HEK293 (cell line): ENCODE measurements at regions of chr2 and their contacts with region 1.

Region 1: DNA sequence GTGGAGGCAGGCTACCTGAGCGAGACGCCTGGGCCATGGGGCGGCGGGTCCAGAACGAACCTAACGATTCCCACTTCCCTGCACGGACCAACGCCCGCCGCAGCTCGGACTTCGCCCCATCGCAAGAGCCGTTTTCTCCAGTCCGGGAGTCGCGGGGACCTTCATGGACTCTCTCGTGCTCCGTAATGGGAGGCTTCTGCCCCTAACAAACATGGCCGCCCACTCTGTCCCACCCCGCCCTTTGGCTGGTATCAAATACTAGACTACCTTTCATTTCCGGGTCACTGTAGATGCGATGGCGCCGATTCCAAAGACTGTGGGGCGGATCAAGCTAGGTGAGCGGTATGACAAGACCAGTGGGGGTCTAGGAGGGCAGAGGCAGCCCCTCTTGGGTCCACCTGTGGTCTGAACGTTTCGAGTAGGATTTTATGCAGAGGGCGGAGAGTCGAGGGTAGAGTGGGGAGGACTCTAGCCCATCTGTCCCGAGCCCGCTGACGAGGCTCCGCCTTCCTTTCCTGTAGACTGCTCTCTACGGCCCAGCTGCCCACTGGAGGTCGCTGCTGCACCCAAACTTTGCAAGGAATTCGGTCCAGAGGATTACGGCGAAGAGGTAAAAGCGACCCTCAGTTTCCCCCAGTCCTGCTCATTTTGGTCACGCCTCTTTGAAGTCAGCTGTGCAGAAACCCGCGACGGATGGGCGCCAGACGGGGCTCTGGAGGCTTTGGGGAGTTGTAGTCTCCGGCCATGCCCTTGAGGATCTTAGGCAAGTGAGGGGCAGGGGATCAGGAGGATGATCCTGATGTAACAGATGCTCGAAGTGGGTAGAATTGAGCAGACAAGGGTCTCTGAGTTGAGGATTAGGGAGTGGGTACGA is at the starts of genes CCDC142 and TTC31:
- H3K4me3 ChIP-seq: peak within 1 kb of the TSS; percentile 92
- H3K27ac ChIP-seq: peak within 1 kb of the TSS; percentile 74
- H3K4me1 ChIP-seq: no peaks in the 10 kb centered on the region
- CTCF ChIP-seq: peak; percentile 88

Region 2: DNA sequence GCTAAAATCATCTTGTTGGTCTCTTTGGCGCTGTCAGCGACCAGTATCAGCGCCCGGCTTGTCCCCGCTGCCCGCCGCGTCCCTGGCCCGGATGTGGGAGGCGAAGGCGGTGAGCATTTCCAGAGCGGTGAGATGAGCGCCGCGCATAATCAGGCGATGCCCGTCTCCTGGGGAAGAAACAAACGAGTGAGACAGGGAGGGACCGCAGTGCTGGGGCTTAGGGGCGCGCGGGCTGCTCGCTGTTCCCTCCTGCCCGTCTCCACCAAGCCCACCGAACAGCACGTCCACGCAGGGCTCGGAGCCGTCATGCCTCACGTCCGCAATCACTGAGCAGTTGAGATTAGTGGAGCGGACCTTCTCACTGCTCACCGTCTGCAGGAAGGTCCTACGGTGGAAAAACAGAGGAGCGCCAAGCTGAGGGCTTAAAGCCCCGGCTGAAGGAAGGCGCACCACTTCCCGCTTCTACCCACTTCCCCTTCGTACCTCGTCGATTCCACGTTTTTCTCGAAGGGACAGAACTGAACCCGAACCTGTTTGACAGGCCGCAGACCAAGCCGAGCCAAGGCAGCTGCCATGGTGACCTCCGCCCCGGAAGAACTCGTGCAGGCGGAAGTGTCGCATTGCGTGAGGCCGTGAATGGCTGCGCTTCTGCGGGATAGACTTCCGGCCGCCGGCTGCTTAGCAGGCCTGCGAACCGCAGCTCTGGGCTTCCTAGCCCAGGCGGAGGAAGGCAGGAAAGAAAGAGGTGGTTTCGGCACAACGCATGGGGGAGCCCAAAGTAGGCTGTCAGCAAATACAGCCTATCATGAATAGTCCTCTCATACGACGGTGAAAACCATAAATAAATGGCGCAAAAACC is 10.7 kb before region 1 on chr2 and contains the start of gene MRPL53:
- CTCF ChIA-PET with region 1: interaction called, 14 read pairs
- POLR2A ChIA-PET with region 1: interaction called, 29 read pairs
- H3K4me3 ChIP-seq: peak within 1 kb of the TSS; percentile 55
- H3K27ac ChIP-seq: peak within 1 kb of the TSS; percentile 87
- H3K4me1 ChIP-seq: 0 out of 2 replicates have a peak, but pooled peaks cover 2% of the 10 kb centered on the region
- CTCF ChIP-seq: no peak; the same call in 1 of the 2 replicates

Region 3: DNA sequence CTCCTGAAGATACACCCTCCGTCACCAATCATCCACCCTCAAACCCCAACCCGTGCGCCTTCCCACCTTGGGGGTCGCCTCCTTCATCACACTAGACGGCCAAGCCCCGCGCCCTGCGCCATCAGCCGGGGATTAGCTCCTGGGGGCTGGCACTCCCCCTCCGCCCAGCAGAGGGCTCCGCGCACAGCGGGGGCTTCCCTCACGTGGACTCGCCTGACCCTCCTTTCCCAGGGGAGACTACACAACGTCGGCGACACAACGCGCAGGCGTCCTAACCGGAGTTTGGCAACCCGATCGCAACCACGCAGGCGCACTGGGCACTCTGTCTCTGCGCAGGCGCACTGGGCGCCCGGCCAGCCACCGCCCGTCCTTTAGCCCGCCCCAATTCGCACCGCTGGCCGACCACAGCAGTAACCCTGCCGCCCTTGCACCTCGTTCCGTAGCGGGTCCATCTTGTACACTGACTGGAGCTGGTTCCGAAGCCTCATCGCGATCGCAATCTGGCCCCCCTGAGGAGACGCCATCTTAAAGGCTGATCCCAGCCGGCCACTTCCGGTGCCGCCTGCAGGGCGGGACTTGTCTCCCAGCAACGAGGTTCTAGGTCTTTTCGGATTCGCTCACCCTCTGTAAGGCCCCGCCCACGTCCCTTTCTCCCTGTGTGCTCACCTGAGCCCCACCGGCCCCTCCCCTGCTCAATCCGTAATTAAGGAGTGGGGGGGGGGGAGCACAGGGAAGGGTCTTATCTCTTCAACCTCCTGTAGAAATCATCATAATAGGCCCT is 24.3 kb after region 1 on chr2 and contains the start of gene PCGF1:
- CTCF ChIA-PET with region 1: interaction called, 13 read pairs
- POLR2A ChIA-PET with region 1: interaction called, 10 read pairs
- H3K4me3 ChIP-seq: peak within 1 kb of the TSS; percentile 100
- H3K27ac ChIP-seq: peak within 1 kb of the TSS; percentile 96
- H3K4me1 ChIP-seq: peaks cover 4% of the 10 kb centered on the region; the same call in 1 of the 2 replicates
- CTCF ChIP-seq: peak; percentile 100

Region 4: GRCh38 chr2:74529357-74530238 is 46.6 kb after region 1 on chr2 and contains the starts of genes AUP1 and HTRA2:
- CTCF ChIA-PET with region 1: interaction called, 34 read pairs
- POLR2A ChIA-PET with region 1: interaction called, 17 read pairs
- H3K4me3 ChIP-seq: peak within 1 kb of the TSS; percentile 57
- H3K27ac ChIP-seq: peak within 1 kb of the TSS; percentile 72
- H3K4me1 ChIP-seq: no peaks in the 10 kb centered on the region; the same call in 1 of the 2 replicates
- CTCF ChIP-seq: no peak

Region 5: DNA sequence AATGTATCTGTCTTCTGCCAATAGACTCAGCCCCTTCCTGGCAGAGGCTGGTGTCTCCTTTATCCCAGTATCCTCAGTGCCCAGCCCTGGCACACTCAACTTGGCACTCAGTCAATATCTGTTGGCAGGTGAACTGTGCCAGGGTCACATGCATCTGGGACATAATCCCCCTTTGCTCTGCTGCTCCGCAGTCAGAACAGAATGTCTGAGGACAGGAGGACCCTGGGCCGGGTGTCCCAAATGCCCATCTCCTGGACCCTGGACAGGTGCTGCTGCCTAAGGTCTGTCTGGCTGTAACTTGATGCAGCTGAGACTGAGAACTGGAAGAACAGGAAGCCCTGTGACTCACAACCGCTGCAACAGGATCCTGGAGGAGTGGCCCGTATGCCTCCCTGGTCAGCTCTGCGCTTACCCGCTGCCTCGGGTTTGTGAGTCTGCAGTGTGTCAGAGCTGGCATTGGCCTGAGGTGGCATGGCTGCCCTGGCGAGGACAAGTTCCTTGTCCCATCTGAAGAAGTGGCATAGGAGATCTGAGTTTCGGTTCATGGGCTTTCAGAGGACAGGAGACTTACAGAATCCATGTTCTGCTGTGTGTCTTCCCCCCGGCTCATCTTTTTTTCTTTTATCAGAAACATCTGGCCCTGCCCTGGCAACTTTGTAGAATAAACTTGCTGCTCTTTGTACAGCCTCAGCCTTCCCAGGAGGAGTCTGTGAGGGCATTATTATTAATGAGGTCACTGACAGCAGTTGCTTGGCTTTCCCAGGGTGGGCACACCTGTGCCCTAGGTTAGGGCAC is 362.4 kb after region 1 on chr2:
- CTCF ChIA-PET with region 1: no interaction called
- POLR2A ChIA-PET with region 1: no interaction called
- H3K4me3 ChIP-seq: no peak overlapping the region
- H3K27ac ChIP-seq: no peak overlapping the region
- H3K4me1 ChIP-seq: peaks cover 3% of the 10 kb centered on the region; the same call in 1 of the 2 replicates
- CTCF ChIP-seq: no peak

Region 6: GRCh38 chr2:74944987-74945787 is 462.1 kb after region 1 on chr2:
- CTCF ChIA-PET with region 1: no interaction called
- POLR2A ChIA-PET with region 1: no interaction called
- H3K4me3 ChIP-seq: no peak overlapping the region
- H3K27ac ChIP-seq: no peak overlapping the region
- H3K4me1 ChIP-seq: no peaks in the 10 kb centered on the region
- CTCF ChIP-seq: no peak